ENCODE measurements at regions of chr5 and their contacts with region 1.

Region 1: DNA sequence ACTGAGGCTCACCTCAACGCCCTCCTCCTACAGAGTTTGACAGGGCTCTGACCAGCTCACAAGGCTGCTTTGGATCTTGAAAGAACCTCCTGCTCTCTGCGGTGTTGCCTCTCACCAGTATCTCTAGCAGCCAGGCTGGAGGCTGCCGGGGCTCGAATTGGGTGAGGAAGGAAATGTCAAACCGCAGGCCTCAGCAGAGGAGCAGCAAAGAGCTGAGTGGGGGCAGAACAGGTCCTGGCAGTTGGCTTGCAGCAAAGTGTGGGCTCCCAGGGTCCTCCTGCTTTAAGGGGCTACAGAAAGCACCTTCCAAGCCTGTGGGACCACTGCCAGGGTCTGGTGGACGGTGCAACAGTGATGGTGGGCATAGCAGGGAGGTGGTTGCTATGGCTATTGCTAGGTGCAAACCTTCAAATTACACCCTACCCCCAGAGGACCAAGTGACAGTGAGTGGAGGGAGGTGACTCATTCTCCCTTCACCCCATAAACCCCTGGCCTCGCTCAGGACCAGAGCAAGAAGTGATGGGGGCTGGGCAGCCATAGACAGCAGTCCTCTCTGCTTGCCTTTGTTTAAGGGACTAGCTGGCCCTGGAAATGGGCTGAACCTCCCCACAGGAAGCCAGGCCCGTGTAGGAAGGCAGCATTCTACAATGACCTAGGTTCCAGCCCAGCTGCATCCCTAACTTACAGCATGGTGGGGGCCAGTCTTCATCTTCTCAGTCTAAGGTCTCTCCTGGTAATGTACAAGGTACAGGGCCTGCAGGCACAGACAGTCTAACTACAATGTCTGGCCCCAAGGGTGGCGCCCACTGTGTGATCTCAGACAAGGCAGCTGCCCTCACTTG is 18.7 kb downstream of the LCP2 start:
- DNase-seq: peak; percentile 59 to 96 (median 92)
- ATAC-seq: peak; percentile 73 to 80
- H3K4me3 Mint-ChIP-seq: peak overlapping the region; percentile 67 to 97 (median 84)
- H3K27ac Mint-ChIP-seq: peak overlapping the region; percentile 92 to 99 (median 96)
- H3K4me1 Mint-ChIP-seq: peaks cover 69 to 100% (median 95%) of the 10 kb centered on the region in 4 donors
- H3K27me3 Mint-ChIP-seq: no peaks in the 10 kb centered on the region

Region 2: GRCh38 chr5:170173235-170173634 is 105.6 kb before region 1 on chr5:
- POLR2A ChIA-PET with region 1: no interaction called
- DNase-seq: no peak
- ATAC-seq: no peak
- H3K4me3 Mint-ChIP-seq: no peak overlapping the region
- H3K27ac Mint-ChIP-seq: no peak overlapping the region
- H3K4me1 Mint-ChIP-seq: no peaks in the 10 kb centered on the region
- H3K27me3 Mint-ChIP-seq: peaks cover 0 to 2% (median 0%) of the 10 kb centered on the region in 5 donors

Region 3: DNA sequence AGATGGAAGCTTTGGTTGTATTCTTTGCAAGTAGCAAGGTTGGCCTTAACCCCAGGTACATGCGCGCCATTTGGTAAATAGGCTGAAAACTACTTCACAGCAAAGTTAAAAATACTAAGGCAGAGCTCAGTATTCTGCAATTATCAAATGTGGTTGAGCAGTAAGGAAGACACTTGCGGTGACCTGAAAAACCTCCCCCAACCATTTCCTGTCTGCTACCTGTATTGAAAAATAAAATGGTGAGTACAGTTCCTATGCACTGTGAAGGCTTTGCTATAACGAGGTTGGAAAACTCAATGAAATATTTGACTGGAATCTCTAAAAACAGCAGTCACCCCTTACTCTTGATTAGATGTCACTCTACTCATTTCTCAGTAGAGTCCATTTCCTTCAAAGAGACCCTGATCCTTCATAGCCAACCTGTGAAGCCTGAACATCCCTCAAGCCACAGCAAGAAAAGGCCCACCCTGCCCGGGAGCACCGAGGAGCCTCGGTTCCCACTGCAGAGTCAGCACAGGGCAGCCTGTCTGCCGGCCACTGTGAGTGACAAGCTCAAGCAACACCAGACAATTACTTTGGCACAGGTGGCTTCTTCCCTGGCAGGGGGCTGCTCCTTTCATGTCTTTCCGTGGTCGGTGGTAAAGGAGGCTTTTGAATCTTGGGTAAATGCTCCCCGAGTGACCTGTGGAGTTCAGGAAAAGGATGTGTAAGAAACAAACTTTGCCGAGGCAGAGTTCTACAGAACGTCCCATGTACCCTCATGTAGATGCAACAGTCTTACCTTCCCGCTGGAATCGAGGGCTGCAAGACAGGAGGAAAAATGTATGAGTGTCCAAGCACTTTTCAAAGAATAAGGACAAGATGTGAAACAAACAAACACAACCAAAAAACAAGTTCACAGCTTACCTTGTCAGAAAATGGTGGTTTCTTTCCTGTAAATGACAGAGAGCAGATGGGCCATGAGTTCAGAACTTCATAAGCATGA is 16.5 kb before region 1 on chr5:
- POLR2A ChIA-PET with region 1: interaction called, 96 read pairs
- DNase-seq: peak in 8 of 10 donors; percentile 62 to 90 (median 77)
- ATAC-seq: peak; percentile 81 to 90
- H3K4me3 Mint-ChIP-seq: peak overlapping the region; percentile 29 to 80 (median 72)
- H3K27ac Mint-ChIP-seq: peak overlapping the region; percentile 84 to 99 (median 96)
- H3K4me1 Mint-ChIP-seq: peaks cover 48 to 95% (median 90%) of the 10 kb centered on the region in 4 donors
- H3K27me3 Mint-ChIP-seq: no peaks in the 10 kb centered on the region

Region 4: DNA sequence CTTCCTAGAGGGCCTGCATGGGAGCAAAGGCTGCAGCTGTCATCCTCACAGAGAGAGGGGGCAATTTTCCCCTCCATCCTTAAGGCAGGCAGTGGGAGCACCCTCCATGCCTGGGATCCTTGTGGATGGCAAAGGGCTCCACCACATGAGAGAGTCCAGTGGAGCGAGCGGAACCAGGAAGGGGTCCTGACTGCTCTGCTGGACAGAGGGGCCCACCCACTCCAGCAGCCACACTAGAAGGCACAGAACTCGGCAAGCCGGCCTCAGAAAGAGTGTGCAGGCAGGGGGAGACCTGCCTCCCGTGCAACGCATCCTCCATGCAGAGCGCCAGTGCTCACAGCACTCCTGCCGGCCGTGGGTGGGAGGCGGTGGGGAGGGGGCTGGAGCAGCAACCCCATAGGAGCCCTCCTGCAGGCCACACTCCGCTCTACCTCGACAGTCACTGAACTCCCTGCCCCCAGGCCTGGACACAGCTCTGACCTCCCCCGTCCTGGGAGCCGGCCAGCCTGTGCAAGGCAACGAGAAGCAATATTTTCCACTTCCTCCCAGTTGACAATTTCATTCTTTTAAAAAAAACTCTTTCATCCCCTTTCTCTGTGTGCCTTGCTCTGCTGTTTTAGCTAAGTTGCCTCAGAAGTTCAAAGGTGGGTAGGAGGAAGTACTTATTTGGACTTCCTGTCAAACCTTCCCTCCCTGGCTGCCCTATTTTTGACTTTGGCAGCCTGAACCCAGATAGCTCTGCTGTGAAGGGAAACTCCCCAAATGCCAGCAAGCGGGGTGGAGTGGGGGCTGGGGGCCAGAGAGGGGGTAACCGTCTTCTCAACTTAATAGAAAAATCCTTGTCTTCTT is 24.0 kb after region 1 on chr5:
- POLR2A ChIA-PET with region 1: interaction called, 687 read pairs
- DNase-seq: peak; percentile 44 to 87 (median 80)
- ATAC-seq: peak; percentile 93 to 97
- H3K4me3 Mint-ChIP-seq: peak overlapping the region; percentile 78 to 96 (median 89)
- H3K27ac Mint-ChIP-seq: peak overlapping the region; percentile 89 to 99 (median 96)
- H3K4me1 Mint-ChIP-seq: peaks cover 36 to 91% (median 86%) of the 10 kb centered on the region in 4 donors
- H3K27me3 Mint-ChIP-seq: no peaks in the 10 kb centered on the region

Region 5: DNA sequence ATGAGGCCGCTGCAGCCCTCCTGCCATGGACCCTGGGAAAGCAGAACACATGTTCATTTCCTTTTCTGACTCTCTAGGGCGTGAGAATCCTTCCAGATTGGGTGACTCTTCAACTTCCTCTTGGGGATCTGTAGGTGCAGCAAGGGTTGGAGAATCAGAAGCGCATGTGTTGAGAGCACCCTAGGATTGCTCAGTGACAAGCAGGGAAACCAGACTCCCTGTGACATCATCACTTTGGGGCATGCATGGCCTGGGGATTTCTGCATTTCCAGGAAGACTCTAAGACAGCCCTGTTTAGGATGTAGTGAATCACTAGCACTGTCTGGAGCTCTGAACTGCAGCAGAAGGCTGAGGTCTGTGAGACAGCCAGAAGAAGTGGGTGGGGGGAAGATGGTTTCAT is 33.8 kb after region 1 on chr5:
- POLR2A ChIA-PET with region 1: interaction called, 687 read pairs
- DNase-seq: peak in 2 of 10 donors; percentile 45 to 71
- ATAC-seq: peak; percentile 75 to 77
- H3K4me3 Mint-ChIP-seq: peak overlapping the region; percentile 31 to 86 (median 80)
- H3K27ac Mint-ChIP-seq: peak overlapping the region; percentile 85 to 96 (median 92)
- H3K4me1 Mint-ChIP-seq: peaks cover 36 to 80% (median 65%) of the 10 kb centered on the region in 4 donors
- H3K27me3 Mint-ChIP-seq: no peaks in the 10 kb centered on the region

Region 6: GRCh38 chr5:170338933-170339779 is 60.3 kb after region 1 on chr5:
- POLR2A ChIA-PET with region 1: interaction called, 223 read pairs
- DNase-seq: peak in 9 of 10 donors; percentile 52 to 84 (median 64)
- ATAC-seq: peak; percentile 70 to 74
- H3K4me3 Mint-ChIP-seq: peak overlapping the region in 5 of 10 donors; percentile 22 to 57 (median 32)
- H3K27ac Mint-ChIP-seq: peak overlapping the region in 9 of 10 donors; percentile 48 to 94 (median 90)
- H3K4me1 Mint-ChIP-seq: peaks cover 0 to 40% (median 35%) of the 10 kb centered on the region in 4 donors
- H3K27me3 Mint-ChIP-seq: no peaks in the 10 kb centered on the region

Region 7: DNA sequence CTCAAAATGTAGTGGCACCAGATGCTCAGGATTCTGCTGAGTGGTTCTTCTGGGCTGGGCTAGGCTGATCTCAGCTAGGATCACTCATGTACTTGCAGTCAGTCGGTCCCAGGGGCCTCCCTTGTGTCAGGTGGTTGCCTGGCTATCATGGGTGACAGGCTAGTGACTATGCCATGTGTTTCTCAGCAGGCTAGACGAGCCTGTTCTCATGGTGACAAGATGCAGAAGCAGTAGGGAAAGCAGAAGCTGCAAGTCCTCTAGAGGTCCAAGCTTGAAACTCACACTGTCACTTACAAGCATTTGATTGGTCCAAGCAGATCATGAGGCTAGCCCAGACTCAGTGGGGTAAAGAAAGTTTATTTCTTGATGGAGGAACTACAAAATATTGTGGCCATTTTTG is 125.6 kb after region 1 on chr5:
- POLR2A ChIA-PET with region 1: no interaction called
- DNase-seq: no peak
- ATAC-seq: peak in 1 of 2 donors; percentile 25
- H3K4me3 Mint-ChIP-seq: no peak overlapping the region
- H3K27ac Mint-ChIP-seq: no peak overlapping the region
- H3K4me1 Mint-ChIP-seq: peaks cover 0 to 16% (median under 1%) of the 10 kb centered on the region in 4 donors
- H3K27me3 Mint-ChIP-seq: no peaks in the 10 kb centered on the region

Measured in naive thymus-derived CD8-positive, alpha-beta T cell (primary cell).